Dorsolateral prefrontal cortex (tissue), 120 donors: ENCODE measurements at regions of chr14 and their contacts with region 1.

Region 1: DNA sequence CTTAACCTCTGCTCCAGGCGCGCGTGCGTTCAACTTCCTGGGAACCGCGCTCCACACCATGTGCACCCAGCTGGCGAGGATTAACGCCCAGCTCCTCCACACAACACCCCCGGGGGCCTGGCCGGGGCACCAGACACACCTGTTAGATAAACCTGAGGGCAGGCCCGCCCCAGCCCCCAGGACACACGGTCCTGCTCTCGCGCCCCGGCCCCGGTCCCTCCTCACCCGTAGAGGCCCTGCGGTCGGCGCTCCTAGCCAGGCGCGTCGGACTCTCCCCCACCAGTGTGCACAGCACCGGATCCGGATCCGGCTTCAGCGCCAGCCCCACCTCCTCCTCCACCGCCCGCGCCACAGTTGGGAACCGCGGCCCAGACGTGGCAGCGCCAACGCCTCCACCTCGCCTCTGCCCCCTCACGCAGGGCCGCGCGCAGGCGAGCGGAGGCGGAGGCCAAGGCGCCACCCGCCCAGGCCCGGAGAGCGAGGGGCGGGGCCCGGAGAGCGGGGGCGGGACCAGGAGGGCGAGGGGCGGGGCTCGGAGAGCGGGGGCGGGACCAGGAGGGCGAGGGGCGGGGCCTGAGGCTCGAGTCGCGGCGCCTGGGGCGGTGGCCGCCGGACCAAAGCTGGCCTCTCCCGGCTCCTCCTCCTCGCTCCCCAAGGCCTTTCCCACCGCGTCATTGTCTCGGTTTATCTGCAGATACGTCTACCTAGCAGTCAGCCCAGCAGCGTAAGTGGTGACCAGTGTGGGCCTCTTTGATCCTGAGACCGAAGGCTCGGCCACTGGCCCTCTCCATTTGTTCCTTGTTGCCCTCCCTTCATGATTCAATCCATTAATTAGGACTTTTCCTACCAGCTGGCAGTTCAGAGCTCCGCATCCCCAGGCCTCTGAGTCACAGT is at the start of gene GNPNAT1:
- DNase-seq: peak; percentile 67 to 91 (median 74)
- H3K4me3 ChIP-seq: peak within 1 kb of the TSS; percentile 64 to 98 (median 88)
- H3K27ac ChIP-seq: peak within 1 kb of the TSS; percentile 18 to 96 (median 87)
- H3K27me3 ChIP-seq: no peaks in the 10 kb centered on the region
- CTCF ChIP-seq: peak in 9 of 56 donors; percentile 11 to 27 (median 19)
- total RNA-seq, gene GNPNAT1: 8.5 to 31.1 (median 17.1) TPM

Region 2: GRCh38 chr14:52729925-52730667 is 61.4 kb before region 1 on chr14 and contains the start of gene STYX:
- intact Hi-C with region 1: loop called in 1 of 2 experiments (anchors 2 kb)
- DNase-seq: peak; percentile 90 to 98 (median 96)
- H3K4me3 ChIP-seq: peak within 1 kb of the TSS; percentile 70 to 99 (median 94)
- H3K27ac ChIP-seq: peak within 1 kb of the TSS in 58 of 59 donors; percentile 22 to 92 (median 78)
- H3K27me3 ChIP-seq: no peaks in the 10 kb centered on the region
- CTCF ChIP-seq: peak in 50 of 56 donors; percentile 11 to 71 (median 40)
- total RNA-seq, gene STYX: 5.3 to 12.8 (median 7.4) TPM

Region 3: GRCh38 chr14:53380052-53380866 is 588.8 kb after region 1 on chr14:
- intact Hi-C with region 1: no loop called
- DNase-seq: no peak
- H3K4me3 ChIP-seq: no peak overlapping the region
- H3K27ac ChIP-seq: peak overlapping the region in 2 of 59 donors; percentile 34 to 50
- H3K27me3 ChIP-seq: no peaks in the 10 kb centered on the region
- CTCF ChIP-seq: no peak